Heart left ventricle (tissue), 16 donors: ENCODE measurements at regions of chr4 and their contacts with region 1.

Region 1: GRCh38 chr4:125735102-125735501 is 420.3 kb downstream of the FAT4 start:
- DNase-seq: peak in 2 of 5 donors; percentile 23 to 40
- ATAC-seq: peak; percentile 80 to 91 (median 86)
- H3K4me3 ChIP-seq: no peak overlapping the region
- H3K27ac ChIP-seq: peak overlapping the region in 2 of 12 donors; percentile 11 to 15
- H3K4me1 ChIP-seq: peaks cover 0 to 26% (median 11%) of the 10 kb centered on the region in 12 donors
- H3K27me3 ChIP-seq: no peaks in the 10 kb centered on the region
- CTCF ChIP-seq: no peak
- POLR2A ChIP-seq: no peak

Region 2: DNA sequence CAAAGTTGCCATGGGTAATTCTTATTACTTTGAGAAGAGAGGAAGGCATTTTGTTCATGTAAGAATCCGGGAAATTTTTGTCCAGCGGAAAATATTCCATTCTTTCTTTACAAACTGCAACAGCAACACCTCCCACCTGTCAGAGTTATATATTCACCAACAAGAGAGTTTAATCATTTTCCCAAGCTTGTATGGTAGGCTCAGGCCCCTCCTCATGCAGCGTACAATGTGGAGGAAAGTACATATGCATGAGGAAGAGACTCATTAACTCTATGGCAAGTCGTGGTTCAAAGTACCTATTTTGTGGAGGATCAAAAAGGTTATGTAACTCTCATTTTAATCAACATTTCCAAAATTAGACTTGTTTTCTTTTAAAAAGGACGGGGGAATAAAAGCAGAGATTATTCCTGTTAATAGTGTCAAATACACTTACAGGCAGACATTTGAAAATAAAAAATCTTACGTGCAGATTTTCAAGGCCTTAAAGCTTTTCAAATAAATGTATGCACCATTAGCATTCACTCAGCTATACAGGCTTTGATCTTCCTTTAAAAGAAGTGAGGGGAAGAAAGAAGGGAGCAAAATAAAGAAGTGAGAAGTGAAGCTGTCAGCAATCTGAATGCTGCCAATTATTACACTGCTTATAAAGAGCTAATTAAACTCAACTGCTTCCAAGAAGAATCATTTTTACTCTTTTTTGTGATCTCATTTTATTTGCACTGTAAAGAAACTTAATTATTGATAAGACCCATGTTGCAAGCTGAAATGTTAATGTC is 215.5 kb before region 1 on chr4:
- intact Hi-C with region 1: loop called in 1 of 10 experiments (anchors 10 kb)
- DNase-seq: no peak
- ATAC-seq: no peak
- H3K4me3 ChIP-seq: no peak overlapping the region
- H3K27ac ChIP-seq: peak overlapping the region in 4 of 12 donors; percentile 25 to 45 (median 40)
- H3K4me1 ChIP-seq: peaks cover 0 to 24% (median 1%) of the 10 kb centered on the region in 12 donors
- H3K27me3 ChIP-seq: no peaks in the 10 kb centered on the region
- CTCF ChIP-seq: no peak
- POLR2A ChIP-seq: no peak

Region 3: GRCh38 chr4:125620066-125620860 is 114.8 kb before region 1 on chr4:
- intact Hi-C with region 1: loop called in 1 of 10 experiments (anchors 10 kb)
- DNase-seq: no peak
- ATAC-seq: no peak
- H3K4me3 ChIP-seq: peak overlapping the region in 2 of 12 donors; percentile 19 to 29
- H3K27ac ChIP-seq: peak overlapping the region in 2 of 12 donors; percentile 21 to 38
- H3K4me1 ChIP-seq: no peaks in the 10 kb centered on the region
- H3K27me3 ChIP-seq: no peaks in the 10 kb centered on the region
- CTCF ChIP-seq: no peak
- POLR2A ChIP-seq: no peak

Region 4: GRCh38 chr4:125638790-125639621 is 96.1 kb before region 1 on chr4:
- intact Hi-C with region 1: loop called in 1 of 10 experiments (anchors 10 kb)
- DNase-seq: peak in 3 of 5 donors; percentile 22 to 43 (median 36)
- ATAC-seq: peak; percentile 58 to 90 (median 69)
- H3K4me3 ChIP-seq: no peak overlapping the region
- H3K27ac ChIP-seq: no peak overlapping the region
- H3K4me1 ChIP-seq: peaks cover 0 to 13% (median 0%) of the 10 kb centered on the region in 12 donors
- H3K27me3 ChIP-seq: no peaks in the 10 kb centered on the region
- CTCF ChIP-seq: no peak
- POLR2A ChIP-seq: no peak